ENCODE measurements at regions of chr17 and their contacts with region 1.

Region 1: GRCh38 chr17:74203439-74204240 is at the start of gene RPL38:
- DNase-seq: peak; percentile 97
- H3K4me3 Mint-ChIP-seq: peak within 1 kb of the TSS; percentile 90
- H3K27ac Mint-ChIP-seq: peak within 1 kb of the TSS; percentile 99
- H3K4me1 Mint-ChIP-seq: peaks cover 20% of the 10 kb centered on the region
- H3K27me3 Mint-ChIP-seq: peaks cover 22% of the 10 kb centered on the region
- CTCF ChIP-seq: peak; percentile 93
- total RNA-seq, gene RPL38: 1,197 and 1,378 TPM in 2 replicates

Region 2: DNA sequence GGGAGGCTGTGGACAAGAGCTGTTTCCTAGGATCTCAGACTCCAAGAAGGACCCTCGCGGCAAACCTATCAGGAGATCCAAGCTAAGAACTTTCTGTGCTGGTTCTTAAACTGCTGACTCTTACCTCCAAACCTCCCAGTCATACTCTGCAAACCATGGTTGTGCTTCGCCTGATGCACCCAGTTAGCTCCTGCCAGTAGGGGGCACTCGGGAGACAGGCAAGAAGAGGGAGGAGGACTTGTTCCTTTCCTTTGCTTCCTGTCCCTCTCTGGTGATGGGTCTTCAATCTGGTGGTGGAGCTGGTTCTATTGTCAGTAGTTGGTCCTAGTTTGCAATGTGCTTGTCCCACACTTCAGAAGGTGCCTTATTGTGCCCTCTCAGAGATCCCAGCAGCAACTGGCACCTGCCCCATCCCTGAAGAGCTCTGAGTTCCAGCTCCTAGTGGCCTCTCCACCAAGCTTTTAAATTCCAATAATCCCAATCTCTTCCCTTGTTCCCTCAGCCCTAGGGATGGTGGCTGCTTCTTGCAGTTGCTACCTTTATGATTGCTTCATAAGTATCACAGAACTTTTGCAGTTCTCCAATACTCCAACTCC is 113.7 kb before region 1 on chr17:
- CTCF ChIA-PET with region 1: interaction called, 3 read pairs
- POLR2A ChIA-PET with region 1: no interaction called
- intact Hi-C with region 1: loop called (anchors 2 kb)
- DNase-seq: peak; percentile 66
- H3K4me3 Mint-ChIP-seq: no peak overlapping the region
- H3K27ac Mint-ChIP-seq: no peak overlapping the region
- H3K4me1 Mint-ChIP-seq: no peaks in the 10 kb centered on the region
- H3K27me3 Mint-ChIP-seq: peaks cover 46% of the 10 kb centered on the region
- CTCF ChIP-seq: peak; percentile 46

Region 3: DNA sequence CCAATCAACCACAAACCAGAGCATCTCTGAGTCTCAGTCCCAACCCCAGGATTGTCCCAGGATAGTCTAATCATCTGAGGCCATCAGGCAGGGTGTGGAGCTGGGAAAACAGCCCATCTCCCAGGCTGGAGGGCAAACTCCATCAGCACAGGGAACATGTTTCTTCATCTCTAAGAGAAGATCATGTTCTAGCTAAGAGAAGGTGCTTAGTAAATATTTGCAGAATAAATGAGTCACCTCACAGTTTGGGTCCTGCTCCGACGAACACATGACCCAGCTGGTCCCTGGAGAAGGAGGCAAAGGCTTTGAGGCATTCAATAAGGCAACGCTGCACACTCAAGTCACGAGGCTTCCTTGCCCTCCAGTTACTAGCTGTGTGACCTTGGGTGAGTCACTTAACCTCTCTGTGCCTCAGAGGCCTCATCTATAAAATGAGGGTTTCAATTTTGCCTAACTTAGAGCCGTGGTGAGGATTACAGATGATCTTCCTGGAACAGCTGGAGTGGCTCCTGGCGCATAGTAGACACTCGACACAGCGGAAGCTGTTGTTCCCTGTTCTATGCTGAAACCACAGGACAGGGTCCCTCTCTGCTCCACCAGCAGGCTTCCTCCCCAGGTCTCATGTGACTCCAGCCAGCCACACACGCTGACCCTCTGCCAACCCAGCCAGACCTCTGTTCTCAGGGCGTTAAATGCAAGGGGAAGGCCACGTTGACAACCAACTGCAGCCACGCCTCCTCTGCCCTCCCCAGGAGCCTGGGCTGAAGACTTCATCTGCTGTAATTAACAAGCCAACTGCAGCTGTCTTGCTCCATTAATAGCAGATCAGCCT is 10.5 kb before region 1 on chr17:
- CTCF ChIA-PET with region 1: interaction called, 9 read pairs
- POLR2A ChIA-PET with region 1: interaction called, 15 read pairs
- intact Hi-C with region 1: no loop called
- DNase-seq: peak; percentile 33
- H3K4me3 Mint-ChIP-seq: no peak overlapping the region
- H3K27ac Mint-ChIP-seq: no peak overlapping the region
- H3K4me1 Mint-ChIP-seq: peaks cover 11% of the 10 kb centered on the region
- H3K27me3 Mint-ChIP-seq: peaks cover 49% of the 10 kb centered on the region
- CTCF ChIP-seq: no peak

Region 4: DNA sequence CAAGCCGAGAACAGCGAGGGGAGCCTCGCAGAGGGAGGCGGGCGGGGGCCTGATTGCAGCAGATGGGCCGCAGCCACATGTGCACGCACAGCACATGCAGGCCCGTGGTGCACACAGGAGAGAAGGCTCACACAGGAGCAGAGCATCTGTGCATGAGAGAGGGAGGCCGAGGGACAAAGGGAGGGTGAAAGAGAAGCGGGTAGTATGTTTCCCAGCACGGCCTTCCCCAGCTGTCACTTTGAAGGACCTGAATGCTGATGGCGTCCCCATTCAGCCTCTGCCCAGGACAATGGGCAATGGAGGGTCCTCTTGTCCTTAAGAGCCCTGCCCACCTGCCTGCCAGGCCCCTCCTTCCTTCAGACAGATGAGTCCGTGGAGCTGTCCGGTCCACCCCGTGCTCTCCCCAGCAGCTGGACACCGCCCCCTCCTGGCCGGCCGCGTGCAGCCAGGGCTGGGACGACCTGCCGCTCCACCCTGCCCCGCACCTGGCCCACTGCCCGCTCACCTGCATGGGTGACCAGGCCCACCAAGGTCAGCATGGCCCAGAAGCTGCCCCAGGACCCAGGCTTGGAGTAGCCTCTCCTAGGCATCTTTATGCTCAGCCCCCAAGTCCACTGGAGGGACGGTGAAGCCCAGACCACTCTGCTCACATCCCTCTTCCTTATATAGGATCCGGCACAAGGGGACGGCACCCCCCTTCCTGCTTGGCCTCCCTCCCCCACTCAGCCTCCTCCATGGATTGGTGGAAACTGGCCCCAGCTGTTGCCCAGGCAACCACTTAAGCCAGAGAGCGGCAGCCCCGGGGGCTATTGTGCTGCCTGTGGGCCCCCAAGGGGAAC is 157.8 kb after region 1 on chr17 and contains the start of gene BTBD17:
- CTCF ChIA-PET with region 1: interaction called, 3 read pairs
- POLR2A ChIA-PET with region 1: interaction called, 3 read pairs
- intact Hi-C with region 1: loop called (anchors 2 kb)
- DNase-seq: peak; percentile 42
- H3K4me3 Mint-ChIP-seq: no peak within 1 kb of the TSS
- H3K27ac Mint-ChIP-seq: no peak within 1 kb of the TSS
- H3K4me1 Mint-ChIP-seq: no peaks in the 10 kb centered on the region
- H3K27me3 Mint-ChIP-seq: peaks cover 43% of the 10 kb centered on the region
- CTCF ChIP-seq: peak; percentile 52
- total RNA-seq, gene BTBD17: not detected in 2 replicates